ENCODE measurements at regions of chr3 and their contacts with region 1.

Region 1: GRCh38 chr3:111936191-111936841 is 42.5 kb upstream of the ABHD10 start:
- DNase-seq: no peak
- ATAC-seq: peak; percentile 91
- H3K4me3 ChIP-seq: no peak overlapping the region
- H3K27ac ChIP-seq: no peak overlapping the region
- H3K4me1 ChIP-seq: no peaks in the 10 kb centered on the region; the same call in 1 of the 2 replicates
- H3K27me3 ChIP-seq: no peaks in the 10 kb centered on the region
- CTCF ChIP-seq: no peak

Region 2: GRCh38 chr3:111691293-111691909 is 244.9 kb before region 1 on chr3:
- CTCF ChIA-PET with region 1: interaction called, 16 read pairs
- POLR2A ChIA-PET with region 1: no interaction called
- in situ Hi-C with region 1: no loop called
- intact Hi-C with region 1: no loop called
- DNase-seq: no peak
- ATAC-seq: peak; percentile 86
- H3K4me3 ChIP-seq: no peak overlapping the region
- H3K27ac ChIP-seq: no peak overlapping the region
- H3K4me1 ChIP-seq: no peaks in the 10 kb centered on the region
- H3K27me3 ChIP-seq: peaks cover 4% of the 10 kb centered on the region; the same call in 1 of the 2 replicates
- CTCF ChIP-seq: peak; percentile 73

Region 3: GRCh38 chr3:111737706-111738086 is 198.6 kb before region 1 on chr3:
- CTCF ChIA-PET with region 1: no interaction called
- POLR2A ChIA-PET with region 1: no interaction called
- in situ Hi-C with region 1: no loop called
- intact Hi-C with region 1: no loop called
- DNase-seq: no peak
- ATAC-seq: no peak
- H3K4me3 ChIP-seq: no peak overlapping the region
- H3K27ac ChIP-seq: no peak overlapping the region
- H3K4me1 ChIP-seq: no peaks in the 10 kb centered on the region
- H3K27me3 ChIP-seq: no peaks in the 10 kb centered on the region
- CTCF ChIP-seq: no peak

Region 4: GRCh38 chr3:111895079-111895478 is 41.2 kb before region 1 on chr3:
- CTCF ChIA-PET with region 1: no interaction called
- POLR2A ChIA-PET with region 1: interaction called, 10 read pairs
- in situ Hi-C with region 1: no loop called
- intact Hi-C with region 1: no loop called
- DNase-seq: peak; percentile 30
- ATAC-seq: peak; percentile 87; the same call in 1 of the 2 replicates
- H3K4me3 ChIP-seq: no peak overlapping the region
- H3K27ac ChIP-seq: no peak overlapping the region
- H3K4me1 ChIP-seq: no peaks in the 10 kb centered on the region; the same call in 1 of the 2 replicates
- H3K27me3 ChIP-seq: no peaks in the 10 kb centered on the region
- CTCF ChIP-seq: peak; percentile 62; the same call in 1 of the 2 replicates

Region 5: DNA sequence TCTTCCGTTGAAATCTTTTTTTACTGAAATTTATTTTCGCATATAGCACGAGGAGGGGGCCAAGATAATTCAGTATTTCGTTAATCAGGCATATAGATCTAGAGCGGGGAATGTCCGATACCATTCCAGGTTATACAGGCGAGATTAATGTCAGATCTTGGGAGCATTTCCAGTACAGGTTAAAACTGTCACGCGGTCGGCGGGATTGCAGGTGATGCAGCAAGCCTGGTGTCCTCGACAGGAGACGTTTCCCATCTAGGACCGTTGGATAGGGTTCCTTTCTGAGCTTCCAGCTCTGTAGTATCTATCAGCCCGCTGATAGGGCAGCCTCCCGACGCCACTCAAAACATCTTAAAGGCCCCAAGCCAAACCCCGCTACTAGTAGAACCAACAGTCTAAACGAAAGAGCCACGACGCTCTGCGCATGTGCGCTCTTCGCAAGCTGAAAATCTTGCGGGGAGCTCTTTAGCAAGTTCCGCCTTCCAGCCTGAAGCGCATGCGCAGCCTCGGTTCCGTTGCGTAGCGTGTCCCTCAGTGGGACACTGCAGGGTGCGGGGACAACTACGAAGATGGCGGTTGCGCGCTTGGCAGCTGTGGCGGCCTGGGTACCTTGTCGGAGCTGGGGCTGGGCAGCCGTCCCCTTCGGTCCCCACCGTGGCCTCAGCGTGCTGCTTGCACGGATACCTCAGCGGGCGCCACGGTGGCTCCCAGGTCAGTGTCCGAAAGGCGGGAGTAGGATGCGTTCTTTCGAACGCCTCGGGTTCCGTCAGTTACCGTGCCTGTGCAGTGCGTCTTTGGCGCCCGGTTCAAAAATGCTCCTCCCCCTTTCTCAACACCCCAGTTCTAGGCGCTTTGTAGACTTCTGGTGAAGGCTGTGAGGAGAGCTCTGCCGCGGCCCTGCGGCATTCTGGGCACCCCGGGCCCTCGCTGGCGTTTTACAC is 42.4 kb after region 1 on chr3 and contains the start of gene ABHD10:
- CTCF ChIA-PET with region 1: no interaction called
- POLR2A ChIA-PET with region 1: no interaction called
- in situ Hi-C with region 1: no loop called
- intact Hi-C with region 1: no loop called
- DNase-seq: peak; percentile 94
- ATAC-seq: peak; percentile 99
- H3K4me3 ChIP-seq: peak within 1 kb of the TSS; percentile 74 to 88
- H3K27ac ChIP-seq: peak within 1 kb of the TSS; percentile 87
- H3K4me1 ChIP-seq: peaks cover 11% of the 10 kb centered on the region; the same call in 1 of the 2 replicates
- H3K27me3 ChIP-seq: peaks cover 10% of the 10 kb centered on the region; the same call in 1 of the 2 replicates
- CTCF ChIP-seq: no peak
- total RNA-seq, gene ABHD10: 30.3 TPM

Region 6: GRCh38 chr3:112357930-112358780 is 421.8 kb after region 1 on chr3:
- CTCF ChIA-PET with region 1: no interaction called
- POLR2A ChIA-PET with region 1: no interaction called
- in situ Hi-C with region 1: no loop called
- intact Hi-C with region 1: no loop called
- DNase-seq: no peak
- ATAC-seq: no peak
- H3K4me3 ChIP-seq: no peak overlapping the region
- H3K27ac ChIP-seq: no peak overlapping the region
- H3K4me1 ChIP-seq: no peaks in the 10 kb centered on the region
- H3K27me3 ChIP-seq: no peaks in the 10 kb centered on the region
- CTCF ChIP-seq: no peak